Activated B cell treated with CpG ODN at 0.5 μM for 24 hours (primary cell): ENCODE measurements at regions of chr12 and their contacts with region 1.

Region 1: GRCh38 chr12:92248977-92249376 is 103.3 kb upstream of the BTG1 start:
- DNase-seq: no peak
- ATAC-seq: no peak
- H3K4me3 Mint-ChIP-seq: no peak overlapping the region
- H3K27ac Mint-ChIP-seq: no peak overlapping the region
- H3K4me1 Mint-ChIP-seq: peaks cover 14% of the 10 kb centered on the region
- H3K27me3 Mint-ChIP-seq: no peaks in the 10 kb centered on the region
- CTCF ChIP-seq: no peak

Region 2: DNA sequence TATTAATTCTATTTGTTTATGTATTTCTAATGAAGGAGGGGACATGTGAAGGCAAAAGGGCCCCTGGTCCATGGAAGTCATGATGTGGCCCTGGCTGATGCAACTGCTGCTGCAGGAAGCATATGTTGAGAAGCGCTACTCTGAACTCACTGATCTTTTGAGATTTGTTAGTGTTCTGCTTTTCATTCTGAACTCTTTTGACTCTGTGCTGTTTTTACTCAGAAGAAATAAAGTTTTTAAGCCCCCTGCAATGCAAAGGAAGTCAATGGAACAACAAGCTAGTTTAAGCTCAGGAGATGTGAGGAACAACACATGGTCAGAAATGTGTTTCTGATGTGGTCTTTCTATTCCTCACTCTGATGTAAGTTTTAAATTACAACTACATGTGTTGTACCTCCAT is 14.4 kb before region 1 on chr12:
- CTCF ChIA-PET with region 1: no interaction called
- POLR2A ChIA-PET with region 1: interaction called, 7 read pairs
- intact Hi-C with region 1: loop called (anchors 2 kb)
- DNase-seq: no peak
- ATAC-seq: no peak
- H3K4me3 Mint-ChIP-seq: no peak overlapping the region
- H3K27ac Mint-ChIP-seq: no peak overlapping the region
- H3K4me1 Mint-ChIP-seq: peaks cover 13% of the 10 kb centered on the region
- H3K27me3 Mint-ChIP-seq: no peaks in the 10 kb centered on the region
- CTCF ChIP-seq: no peak

Region 3: DNA sequence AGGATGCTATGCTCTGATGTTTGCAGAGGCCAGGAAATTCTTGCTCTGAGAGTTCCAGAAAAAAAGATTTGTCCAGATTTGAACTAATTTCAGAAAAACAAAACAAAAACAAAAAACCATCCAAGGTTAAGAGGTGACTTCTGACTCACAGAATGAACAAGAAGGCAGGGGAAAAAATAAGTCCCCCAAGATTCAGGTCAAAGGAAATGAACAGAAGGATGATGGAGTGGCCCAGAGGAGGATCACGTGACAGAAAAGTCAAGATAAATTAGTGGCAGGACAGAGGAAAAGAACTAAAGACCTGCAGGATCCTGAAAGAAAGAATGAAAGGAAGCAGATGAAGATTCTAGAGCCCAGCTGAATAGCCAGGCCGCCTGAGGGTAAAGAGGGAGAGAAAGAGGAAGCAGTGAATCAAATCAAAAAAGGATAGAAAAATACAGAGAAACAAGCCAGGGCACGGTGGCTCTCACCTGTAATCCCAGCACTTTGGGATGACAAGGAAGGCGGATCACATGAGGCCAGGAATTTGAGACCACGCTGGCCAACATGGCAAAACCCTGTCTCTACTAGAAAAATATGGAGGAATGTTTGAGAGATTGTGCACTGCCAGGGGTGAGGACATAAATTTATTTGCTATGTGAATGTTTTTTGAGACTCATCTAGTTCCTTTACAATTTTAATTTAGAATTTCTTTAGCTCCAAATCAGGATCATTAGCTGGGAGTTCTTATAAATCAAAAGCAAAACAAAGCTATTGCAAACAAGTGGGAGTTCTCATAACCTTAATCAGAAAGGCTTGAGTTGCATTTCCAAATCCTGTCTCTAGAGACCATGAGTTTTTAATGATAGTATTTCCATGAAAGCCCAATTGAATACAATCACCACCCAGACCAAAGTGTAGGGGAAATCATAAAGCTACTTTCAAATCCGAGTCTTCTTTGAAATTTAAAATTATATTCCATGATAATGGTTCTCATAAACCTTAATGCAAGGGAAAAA is 236.7 kb after region 1 on chr12:
- CTCF ChIA-PET with region 1: no interaction called
- POLR2A ChIA-PET with region 1: no interaction called
- intact Hi-C with region 1: no loop called
- DNase-seq: no peak
- ATAC-seq: peak; percentile 41
- H3K4me3 Mint-ChIP-seq: peak overlapping the region; percentile 50
- H3K27ac Mint-ChIP-seq: peak overlapping the region; percentile 85
- H3K4me1 Mint-ChIP-seq: peaks cover 88% of the 10 kb centered on the region
- H3K27me3 Mint-ChIP-seq: no peaks in the 10 kb centered on the region
- CTCF ChIP-seq: no peak